Endothelial cell of umbilical vein (primary cell): ENCODE measurements at regions of chr15 and their contacts with region 1.

Region 1: DNA sequence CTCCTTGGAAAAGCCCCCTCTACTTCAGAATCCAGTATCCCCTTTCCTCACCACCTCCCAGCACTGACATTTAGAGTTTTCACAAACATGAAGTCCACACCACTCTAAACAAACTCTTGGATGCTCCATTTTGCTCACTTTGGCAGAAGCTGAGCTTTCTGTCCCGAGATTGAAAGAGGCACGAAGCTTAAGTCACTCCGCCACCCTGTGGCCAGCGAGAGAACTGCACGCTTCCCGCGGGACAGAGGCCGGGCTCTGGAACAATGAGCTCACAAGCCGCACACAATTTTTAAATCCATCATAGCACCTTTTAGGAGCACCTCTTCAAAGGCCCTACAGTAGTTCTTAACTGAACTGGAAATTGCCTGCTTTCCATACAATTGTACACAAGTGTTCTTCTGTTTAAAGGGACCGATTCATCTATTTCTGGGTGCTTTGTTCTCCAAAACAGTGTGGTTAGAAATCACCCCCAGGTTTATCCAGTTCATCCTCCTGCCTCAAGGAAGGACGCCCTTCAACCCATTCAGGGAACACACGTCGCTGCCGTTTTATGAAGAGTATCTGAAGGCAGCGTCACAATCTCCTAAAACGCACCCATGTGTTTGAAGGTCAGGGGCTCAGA is 226.1 kb downstream of the VPS13C start:
- DNase-seq: peak; percentile 72
- H3K4me3 ChIP-seq: no peak overlapping the region
- H3K27ac ChIP-seq: no peak overlapping the region
- H3K4me1 ChIP-seq: no peaks in the 10 kb centered on the region
- H3K27me3 ChIP-seq: peaks cover 4 to 7% of the 10 kb centered on the region in 2 experiments
- CTCF ChIP-seq: peak; percentile 87 to 98
- POLR2A ChIP-seq: no peak

Region 2: GRCh38 chr15:60585743-60586708 is 1248.2 kb before region 1 on chr15:
- CTCF ChIA-PET with region 1: interaction called, 28 read pairs
- POLR2A ChIA-PET with region 1: no interaction called
- dilution Hi-C with region 1: no loop called
- intact Hi-C with region 1: no loop called
- DNase-seq: peak; percentile 80
- H3K4me3 ChIP-seq: no peak overlapping the region
- H3K27ac ChIP-seq: no peak overlapping the region
- H3K4me1 ChIP-seq: peaks cover 25% of the 10 kb centered on the region
- H3K27me3 ChIP-seq: no peaks in the 10 kb centered on the region
- CTCF ChIP-seq: peak; percentile 68 to 75
- POLR2A ChIP-seq: no peak

Region 3: DNA sequence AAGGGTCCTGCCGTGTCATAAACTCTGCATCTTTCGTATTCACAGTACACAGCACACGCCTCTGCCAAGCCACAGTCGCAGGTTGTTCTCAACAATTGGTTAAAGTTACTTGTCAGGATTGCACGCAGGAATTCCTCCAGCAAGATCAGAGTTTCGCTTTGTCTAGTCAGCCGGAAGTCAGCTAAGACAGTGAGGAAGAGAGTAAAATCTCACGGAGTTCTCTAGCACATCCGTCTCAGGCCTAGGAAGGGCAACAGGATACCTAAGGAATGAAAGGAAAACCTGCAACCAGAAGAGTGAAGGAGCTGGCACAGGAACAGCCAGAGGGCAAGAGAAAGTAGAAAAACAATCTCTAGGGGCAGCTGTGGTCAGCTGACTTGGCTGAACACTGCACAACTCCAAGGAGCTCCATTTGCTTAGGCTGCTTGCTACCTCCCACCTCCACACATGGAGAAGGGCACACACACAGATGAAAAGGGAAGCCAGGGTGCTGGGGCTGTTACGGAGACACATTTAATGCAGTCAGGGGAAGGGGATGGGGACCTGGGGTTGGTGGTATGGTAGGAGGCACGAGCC is 628.8 kb before region 1 on chr15:
- CTCF ChIA-PET with region 1: interaction called, 12 read pairs
- POLR2A ChIA-PET with region 1: no interaction called
- dilution Hi-C with region 1: no loop called
- intact Hi-C with region 1: no loop called
- DNase-seq: peak; percentile 38
- H3K4me3 ChIP-seq: peak overlapping the region in 2 of 3 experiments; percentile 13 to 41
- H3K27ac ChIP-seq: peak overlapping the region; percentile 2
- H3K4me1 ChIP-seq: peaks cover 13% of the 10 kb centered on the region
- H3K27me3 ChIP-seq: no peaks in the 10 kb centered on the region
- CTCF ChIP-seq: no peak
- POLR2A ChIP-seq: no peak

Region 4: GRCh38 chr15:61530779-61531178 is 303.4 kb before region 1 on chr15:
- CTCF ChIA-PET with region 1: interaction called, 27 read pairs
- POLR2A ChIA-PET with region 1: no interaction called
- dilution Hi-C with region 1: no loop called
- intact Hi-C with region 1: loop called (anchors 1 kb)
- DNase-seq: peak; percentile 3
- H3K4me3 ChIP-seq: no peak overlapping the region
- H3K27ac ChIP-seq: no peak overlapping the region
- H3K4me1 ChIP-seq: peaks cover 37% of the 10 kb centered on the region
- H3K27me3 ChIP-seq: no peaks in the 10 kb centered on the region
- CTCF ChIP-seq: peak in 1 of 2 donors; percentile 7
- POLR2A ChIP-seq: no peak

Region 5: DNA sequence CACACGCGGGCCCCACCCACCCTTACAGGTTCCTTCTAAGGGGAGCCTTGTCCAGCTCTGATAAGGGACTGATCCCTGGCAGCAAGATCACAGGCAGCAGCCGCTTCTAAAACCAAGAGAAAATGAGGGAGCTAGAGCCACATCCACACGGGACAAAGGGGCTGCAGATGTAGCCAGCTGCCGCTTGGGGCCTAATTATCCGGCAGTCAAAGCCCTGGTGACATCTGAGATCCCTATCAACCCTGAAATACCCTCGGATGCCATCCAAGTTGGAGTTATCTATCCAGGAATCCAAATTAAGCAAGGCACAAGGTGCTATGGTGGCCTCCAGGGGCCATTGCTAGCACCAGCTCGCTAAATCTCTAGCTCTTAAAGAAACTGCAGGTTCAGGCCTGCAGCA is 22.2 kb before region 1 on chr15:
- CTCF ChIA-PET with region 1: interaction called, 26 read pairs
- POLR2A ChIA-PET with region 1: no interaction called
- dilution Hi-C with region 1: no loop called
- intact Hi-C with region 1: no loop called
- DNase-seq: no peak
- H3K4me3 ChIP-seq: no peak overlapping the region
- H3K27ac ChIP-seq: no peak overlapping the region
- H3K4me1 ChIP-seq: no peaks in the 10 kb centered on the region
- H3K27me3 ChIP-seq: no peaks in the 10 kb centered on the region
- CTCF ChIP-seq: no peak
- POLR2A ChIP-seq: no peak